ENCODE measurements at regions of chr18 and their contacts with region 1.

Region 1: GRCh38 chr18:36688020-36688965 is 140.5 kb downstream of the TPGS2 start:
- DNase-seq: peak; percentile 70
- H3K4me3 ChIP-seq: no peak overlapping the region; a peak in 1 of 4 replicates
- H3K27ac ChIP-seq: no peak overlapping the region; a peak in 1 of 4 replicates
- H3K4me1 ChIP-seq: peaks cover 0 to 22% of the 10 kb centered on the region in 2 experiments; a peak in 2 of 4 replicates
- H3K27me3 ChIP-seq: no peaks in the 10 kb centered on the region
- CTCF ChIP-seq: peak; percentile 97
- EP300 ChIP-seq: no peak
- RAD21 ChIP-seq: peak; percentile 83

Region 2: GRCh38 chr18:36015629-36016028 is 672.7 kb before region 1 on chr18:
- CTCF ChIA-PET with region 1: no interaction called
- POLR2A ChIA-PET with region 1: no interaction called
- DNase-seq: no peak
- H3K4me3 ChIP-seq: no peak overlapping the region
- H3K27ac ChIP-seq: no peak overlapping the region
- H3K4me1 ChIP-seq: peaks cover 0 to 11% of the 10 kb centered on the region in 2 experiments; a peak in 2 of 4 replicates
- H3K27me3 ChIP-seq: no peaks in the 10 kb centered on the region
- CTCF ChIP-seq: no peak
- EP300 ChIP-seq: no peak
- RAD21 ChIP-seq: no peak

Region 3: DNA sequence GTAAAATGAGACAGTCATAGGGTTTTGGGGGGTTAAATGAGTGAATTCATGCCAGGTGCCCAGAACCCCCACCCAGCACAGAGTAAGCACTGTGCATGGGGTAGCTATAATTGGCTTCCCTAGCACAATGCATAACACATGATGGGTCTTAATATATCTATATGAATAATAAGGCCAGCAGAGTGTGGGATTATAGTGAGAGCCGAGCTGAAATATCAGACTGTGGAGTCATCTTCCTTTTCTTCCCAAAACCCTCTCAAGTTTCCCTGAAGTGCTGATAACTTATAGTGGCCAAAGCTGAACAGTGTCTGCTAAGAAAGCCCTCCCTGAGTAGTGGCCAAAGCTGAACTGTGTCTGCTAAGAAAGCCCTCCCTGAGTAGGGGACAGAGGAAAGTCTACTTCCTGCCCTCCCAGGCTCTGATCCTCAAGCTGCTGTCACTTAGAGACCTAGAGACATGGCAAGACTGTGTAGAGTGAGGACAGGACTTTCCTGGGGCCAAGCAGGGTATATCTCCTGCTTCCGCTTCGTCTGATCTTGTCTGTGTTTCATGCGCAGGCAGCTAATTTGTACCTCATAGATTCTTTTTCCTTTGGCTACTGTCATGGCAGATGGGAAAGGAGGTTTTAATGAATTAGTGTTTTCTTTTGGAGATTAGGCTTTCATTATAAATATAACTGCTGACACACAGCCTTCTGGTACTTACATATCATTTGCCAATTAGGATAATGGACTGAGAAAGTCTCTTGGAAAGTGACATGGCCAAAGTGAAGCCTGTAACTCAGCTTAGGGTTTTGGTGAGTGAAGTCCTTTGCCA is 295.9 kb before region 1 on chr18:
- CTCF ChIA-PET with region 1: no interaction called
- POLR2A ChIA-PET with region 1: no interaction called
- DNase-seq: peak; percentile 46
- H3K4me3 ChIP-seq: no peak overlapping the region
- H3K27ac ChIP-seq: peak overlapping the region in 1 of 2 experiments; percentile 95; a peak in 2 of 4 replicates
- H3K4me1 ChIP-seq: peaks cover 0 to 59% of the 10 kb centered on the region in 2 experiments; a peak in 2 of 4 replicates
- H3K27me3 ChIP-seq: no peaks in the 10 kb centered on the region
- CTCF ChIP-seq: no peak
- EP300 ChIP-seq: no peak
- RAD21 ChIP-seq: no peak

Region 4: GRCh38 chr18:36519358-36519757 is 168.9 kb before region 1 on chr18:
- CTCF ChIA-PET with region 1: no interaction called
- POLR2A ChIA-PET with region 1: no interaction called
- DNase-seq: no peak
- H3K4me3 ChIP-seq: no peak overlapping the region
- H3K27ac ChIP-seq: no peak overlapping the region
- H3K4me1 ChIP-seq: peaks cover 0 to 11% of the 10 kb centered on the region in 2 experiments; a peak in 1 of 4 replicates
- H3K27me3 ChIP-seq: no peaks in the 10 kb centered on the region
- CTCF ChIP-seq: no peak
- EP300 ChIP-seq: no peak
- RAD21 ChIP-seq: no peak

Region 5: GRCh38 chr18:36589857-36590543 is 98.3 kb before region 1 on chr18:
- CTCF ChIA-PET with region 1: no interaction called
- POLR2A ChIA-PET with region 1: no interaction called
- DNase-seq: no peak
- H3K4me3 ChIP-seq: no peak overlapping the region
- H3K27ac ChIP-seq: no peak overlapping the region; a peak in 1 of 4 replicates
- H3K4me1 ChIP-seq: no peaks in the 10 kb centered on the region; a peak in 1 of 4 replicates
- H3K27me3 ChIP-seq: no peaks in the 10 kb centered on the region
- CTCF ChIP-seq: no peak
- EP300 ChIP-seq: no peak
- RAD21 ChIP-seq: no peak

Region 6: DNA sequence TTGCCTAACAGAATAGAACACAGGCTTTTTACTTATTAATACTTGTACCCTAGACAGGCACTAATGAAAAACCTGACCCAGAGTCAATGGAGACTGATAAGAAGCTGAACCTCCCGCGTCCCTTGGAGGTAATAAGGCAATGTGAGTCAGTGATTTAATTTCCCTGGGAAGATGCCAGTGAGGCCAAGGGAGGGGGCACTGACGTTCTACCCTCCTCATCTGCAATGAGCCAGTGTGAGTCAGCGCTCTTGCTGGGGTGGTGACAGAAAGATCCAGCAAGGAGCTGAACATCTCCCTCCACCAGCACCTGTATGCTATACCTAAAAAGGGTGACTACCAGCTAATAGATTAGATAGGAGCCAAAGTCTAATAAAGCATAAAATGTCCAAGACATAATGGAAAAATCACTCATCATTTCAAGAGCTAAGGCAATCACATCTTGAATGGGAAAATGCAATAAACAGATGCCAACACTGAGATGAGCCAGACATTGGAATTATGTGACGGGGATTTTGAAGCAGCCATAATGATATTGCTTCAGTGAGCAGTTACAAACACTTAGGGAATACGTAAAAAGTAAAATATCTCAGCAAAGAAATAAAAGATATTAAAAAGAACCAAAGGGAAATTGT is 23.6 kb after region 1 on chr18:
- CTCF ChIA-PET with region 1: interaction called, 14 read pairs
- POLR2A ChIA-PET with region 1: no interaction called
- DNase-seq: no peak
- H3K4me3 ChIP-seq: no peak overlapping the region
- H3K27ac ChIP-seq: peak overlapping the region in 1 of 2 experiments; percentile 57; a peak in 3 of 4 replicates
- H3K4me1 ChIP-seq: peaks cover 0 to 7% of the 10 kb centered on the region in 2 experiments; a peak in 2 of 4 replicates
- H3K27me3 ChIP-seq: no peaks in the 10 kb centered on the region
- CTCF ChIP-seq: no peak
- EP300 ChIP-seq: peak in 1 of 2 experiments; percentile 52; a peak in 1 of 4 replicates
- RAD21 ChIP-seq: no peak

Region 7: DNA sequence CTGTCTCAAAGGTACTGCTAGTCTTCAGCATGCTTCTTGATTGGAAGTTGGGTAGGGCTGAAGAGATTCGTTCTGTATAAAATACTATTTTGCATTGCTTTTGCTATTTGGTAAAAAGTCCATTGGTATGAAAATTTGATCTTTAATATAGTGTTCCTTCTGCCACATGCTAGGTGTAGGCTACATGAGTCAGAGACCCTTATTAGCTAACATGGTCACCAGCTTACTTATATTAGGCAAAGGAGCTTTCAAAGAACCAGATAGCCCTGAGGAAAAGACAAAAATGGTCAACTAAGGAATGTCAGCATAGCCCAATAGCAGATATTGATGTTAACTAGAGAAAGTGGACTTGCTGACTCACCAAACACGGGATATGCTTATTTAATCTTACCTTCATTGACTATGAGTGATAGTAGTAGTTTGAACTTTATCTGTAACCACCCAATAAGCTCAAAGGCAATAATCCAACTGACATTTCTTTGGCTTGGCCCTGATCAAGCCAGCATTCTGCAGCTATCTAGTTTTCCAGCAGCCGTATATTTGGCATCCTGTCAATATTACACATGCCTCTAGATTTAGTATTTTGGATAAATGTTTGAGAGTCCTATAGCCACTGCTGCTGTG is 30.5 kb after region 1 on chr18:
- CTCF ChIA-PET with region 1: interaction called, 13 read pairs
- POLR2A ChIA-PET with region 1: no interaction called
- DNase-seq: no peak
- H3K4me3 ChIP-seq: no peak overlapping the region
- H3K27ac ChIP-seq: no peak overlapping the region
- H3K4me1 ChIP-seq: no peaks in the 10 kb centered on the region; a peak in 1 of 4 replicates
- H3K27me3 ChIP-seq: no peaks in the 10 kb centered on the region
- CTCF ChIP-seq: no peak
- EP300 ChIP-seq: no peak
- RAD21 ChIP-seq: no peak

Region 8: GRCh38 chr18:36757081-36757480 is 68.8 kb after region 1 on chr18:
- CTCF ChIA-PET with region 1: interaction called, 59 read pairs
- POLR2A ChIA-PET with region 1: no interaction called
- DNase-seq: peak; percentile 76
- H3K4me3 ChIP-seq: no peak overlapping the region
- H3K27ac ChIP-seq: peak overlapping the region in 1 of 2 experiments; percentile 47; a peak in 2 of 4 replicates
- H3K4me1 ChIP-seq: peaks cover 12 to 13% of the 10 kb centered on the region in 2 experiments; a peak in 2 of 4 replicates
- H3K27me3 ChIP-seq: no peaks in the 10 kb centered on the region
- CTCF ChIP-seq: peak; percentile 85
- EP300 ChIP-seq: no peak
- RAD21 ChIP-seq: peak; percentile 96

Region 9: DNA sequence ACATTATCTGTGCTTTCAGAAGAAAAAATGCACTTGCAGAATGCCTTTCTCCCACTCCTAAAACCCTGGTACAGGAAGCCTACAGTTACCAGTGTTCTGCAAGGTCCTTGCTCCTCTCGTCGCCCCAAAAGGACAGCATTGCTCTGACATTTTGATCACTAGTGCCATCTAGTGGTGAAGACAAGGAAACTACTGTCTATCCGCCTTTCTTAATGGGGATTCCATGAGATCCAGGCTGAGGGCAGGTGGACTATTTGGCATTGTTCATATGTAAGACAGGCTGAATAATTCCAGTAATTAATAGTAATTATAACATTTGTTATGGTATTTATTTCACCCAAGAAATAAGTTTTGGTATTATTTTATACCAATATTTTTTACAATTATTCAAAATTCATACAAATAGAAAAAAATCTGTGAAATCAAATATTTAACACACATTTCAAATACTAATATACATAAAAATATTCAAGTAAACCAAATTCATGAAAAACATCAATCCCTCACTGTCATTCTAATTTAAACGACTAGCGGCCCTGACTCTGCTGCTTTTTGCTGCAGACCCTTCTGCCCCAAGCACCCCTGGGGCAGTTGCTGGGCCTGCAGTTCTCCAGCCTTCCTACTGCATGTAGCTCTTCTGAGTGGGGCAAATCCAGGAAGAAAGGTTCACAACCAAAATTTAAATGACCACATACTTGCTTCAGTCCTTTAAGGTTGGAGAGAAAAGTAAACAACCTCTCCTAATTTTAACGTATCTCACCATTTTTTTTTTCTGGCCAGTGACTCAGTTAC is 121.5 kb after region 1 on chr18:
- CTCF ChIA-PET with region 1: interaction called, 17 read pairs
- POLR2A ChIA-PET with region 1: no interaction called
- DNase-seq: peak; percentile 76
- H3K4me3 ChIP-seq: peak overlapping the region in 1 of 2 experiments; percentile 16; a peak in 1 of 4 replicates
- H3K27ac ChIP-seq: peak overlapping the region in 1 of 2 experiments; percentile 44; a peak in 2 of 4 replicates
- H3K4me1 ChIP-seq: peaks cover 0 to 4% of the 10 kb centered on the region in 2 experiments; a peak in 3 of 4 replicates
- H3K27me3 ChIP-seq: no peaks in the 10 kb centered on the region
- CTCF ChIP-seq: peak; percentile 82
- EP300 ChIP-seq: no peak
- RAD21 ChIP-seq: peak; percentile 76

Region 10: GRCh38 chr18:36814994-36815393 is 126.7 kb after region 1 on chr18:
- CTCF ChIA-PET with region 1: interaction called, 17 read pairs
- POLR2A ChIA-PET with region 1: no interaction called
- DNase-seq: no peak
- H3K4me3 ChIP-seq: no peak overlapping the region
- H3K27ac ChIP-seq: no peak overlapping the region; a peak in 1 of 4 replicates
- H3K4me1 ChIP-seq: no peaks in the 10 kb centered on the region; a peak in 1 of 4 replicates
- H3K27me3 ChIP-seq: no peaks in the 10 kb centered on the region
- CTCF ChIP-seq: no peak
- EP300 ChIP-seq: no peak
- RAD21 ChIP-seq: no peak